Heart right ventricle (tissue), 16 donors: ENCODE measurements at regions of chr18 and their contacts with region 1.

Region 1: GRCh38 chr18:62324917-62325805 is at the start of gene TNFRSF11A:
- DNase-seq: peak in 1 of 2 donors; percentile 42
- ATAC-seq: peak in 7 of 8 donors; percentile 13 to 64 (median 42)
- H3K4me3 ChIP-seq: peak within 1 kb of the TSS; percentile 7 to 60 (median 51)
- H3K27ac ChIP-seq: no peak within 1 kb of the TSS
- H3K4me1 ChIP-seq: peaks cover 6 to 54% (median 35%) of the 10 kb centered on the region in 9 donors
- H3K27me3 ChIP-seq: peaks cover 12 to 74% (median 57%) of the 10 kb centered on the region in 7 donors
- CTCF ChIP-seq: peak in 6 of 9 donors; percentile 8 to 23 (median 20)
- total RNA-seq, gene TNFRSF11A: 0.34 to 2.7 (median 1.1) TPM

Region 2: GRCh38 chr18:62138461-62139235 is 186.5 kb before region 1 on chr18:
- intact Hi-C with region 1: no loop called
- DNase-seq: no peak
- ATAC-seq: no peak
- H3K4me3 ChIP-seq: no peak overlapping the region
- H3K27ac ChIP-seq: no peak overlapping the region
- H3K4me1 ChIP-seq: no peaks in the 10 kb centered on the region
- H3K27me3 ChIP-seq: no peaks in the 10 kb centered on the region
- CTCF ChIP-seq: no peak

Region 3: DNA sequence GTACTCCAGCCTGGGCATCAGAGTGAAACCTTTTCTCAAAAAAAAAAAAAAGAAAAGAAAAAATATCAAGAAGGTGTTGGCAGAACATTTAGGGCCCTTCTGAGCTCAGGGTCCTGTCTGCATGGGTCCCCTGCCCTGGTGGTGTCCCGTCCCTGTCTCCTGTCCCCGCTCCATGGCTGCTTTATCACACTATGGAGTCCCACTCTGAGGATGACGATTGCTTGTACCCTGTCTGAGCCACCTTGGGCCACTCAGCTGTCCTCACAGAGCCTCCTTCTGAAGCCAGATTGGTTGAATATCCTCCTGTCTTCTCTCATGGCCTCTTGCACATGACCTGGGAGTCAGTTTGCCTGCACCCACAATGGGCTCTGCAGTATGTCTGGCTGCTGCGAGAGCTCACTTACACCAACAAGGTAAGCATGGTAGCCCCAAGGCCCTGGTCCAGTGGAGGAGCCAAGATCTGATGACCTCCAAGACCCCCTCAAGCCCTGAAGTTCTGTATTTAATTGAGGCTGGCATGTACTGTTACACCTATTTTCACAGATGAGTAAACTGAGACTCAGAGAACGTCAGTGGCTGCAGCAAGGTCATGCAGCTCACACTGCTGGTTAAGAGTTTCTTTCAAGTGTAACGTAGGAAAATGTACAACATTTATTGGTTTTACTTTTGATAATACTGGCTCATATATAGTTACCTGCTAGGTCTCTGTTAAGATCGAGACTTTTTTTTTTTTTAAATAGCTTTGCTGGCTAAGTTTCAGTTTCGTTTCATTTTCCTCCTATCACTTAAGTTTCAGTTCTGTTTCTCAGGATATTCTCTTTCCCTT is 180.7 kb after region 1 on chr18:
- intact Hi-C with region 1: no loop called
- DNase-seq: no peak
- ATAC-seq: peak in 7 of 8 donors; percentile 31 to 66 (median 41)
- H3K4me3 ChIP-seq: peak overlapping the region in 9 of 10 donors; percentile 12 to 54 (median 48)
- H3K27ac ChIP-seq: peak overlapping the region in 9 of 10 donors; percentile 46 to 94 (median 73)
- H3K4me1 ChIP-seq: peaks cover 0 to 15% (median 5%) of the 10 kb centered on the region in 9 donors
- H3K27me3 ChIP-seq: no peaks in the 10 kb centered on the region
- CTCF ChIP-seq: no peak

Region 4: GRCh38 chr18:62545098-62545497 is 219.9 kb after region 1 on chr18:
- intact Hi-C with region 1: loop called in 1 of 10 experiments (anchors 10 kb)
- DNase-seq: no peak
- ATAC-seq: peak in 5 of 8 donors; percentile 24 to 61 (median 42)
- H3K4me3 ChIP-seq: no peak overlapping the region
- H3K27ac ChIP-seq: no peak overlapping the region
- H3K4me1 ChIP-seq: peaks cover 0 to 20% (median 0%) of the 10 kb centered on the region in 9 donors
- H3K27me3 ChIP-seq: no peaks in the 10 kb centered on the region
- CTCF ChIP-seq: no peak

Region 5: GRCh38 chr18:62566199-62566598 is 241.0 kb after region 1 on chr18:
- intact Hi-C with region 1: loop called in 1 of 10 experiments (anchors 10 kb)
- DNase-seq: peak in 1 of 2 donors; percentile 37
- ATAC-seq: peak in 2 of 8 donors; percentile 56 to 57
- H3K4me3 ChIP-seq: no peak overlapping the region
- H3K27ac ChIP-seq: no peak overlapping the region
- H3K4me1 ChIP-seq: no peaks in the 10 kb centered on the region
- H3K27me3 ChIP-seq: no peaks in the 10 kb centered on the region
- CTCF ChIP-seq: peak in 7 of 9 donors; percentile 29 to 51 (median 49)

Region 6: GRCh38 chr18:62982600-62983251 is 657.6 kb after region 1 on chr18:
- intact Hi-C with region 1: loop called in 1 of 10 experiments (anchors 10 kb)
- DNase-seq: peak in 1 of 2 donors; percentile 61
- ATAC-seq: peak; percentile 63 to 87 (median 72)
- H3K4me3 ChIP-seq: peak overlapping the region in 8 of 10 donors; percentile 6 to 53 (median 42)
- H3K27ac ChIP-seq: no peak overlapping the region
- H3K4me1 ChIP-seq: peaks cover 0 to 20% (median 4%) of the 10 kb centered on the region in 9 donors
- H3K27me3 ChIP-seq: no peaks in the 10 kb centered on the region
- CTCF ChIP-seq: peak; percentile 43 to 88 (median 83)